ENCODE measurements at regions of chrX and their contacts with region 1.

Region 1: GRCh38 chrX:15493118-15493962 is at the start of gene PIR:
- DNase-seq: peak; percentile 92
- ATAC-seq: peak; percentile 99
- total RNA-seq, gene PIR: 13.2 TPM

Region 2: DNA sequence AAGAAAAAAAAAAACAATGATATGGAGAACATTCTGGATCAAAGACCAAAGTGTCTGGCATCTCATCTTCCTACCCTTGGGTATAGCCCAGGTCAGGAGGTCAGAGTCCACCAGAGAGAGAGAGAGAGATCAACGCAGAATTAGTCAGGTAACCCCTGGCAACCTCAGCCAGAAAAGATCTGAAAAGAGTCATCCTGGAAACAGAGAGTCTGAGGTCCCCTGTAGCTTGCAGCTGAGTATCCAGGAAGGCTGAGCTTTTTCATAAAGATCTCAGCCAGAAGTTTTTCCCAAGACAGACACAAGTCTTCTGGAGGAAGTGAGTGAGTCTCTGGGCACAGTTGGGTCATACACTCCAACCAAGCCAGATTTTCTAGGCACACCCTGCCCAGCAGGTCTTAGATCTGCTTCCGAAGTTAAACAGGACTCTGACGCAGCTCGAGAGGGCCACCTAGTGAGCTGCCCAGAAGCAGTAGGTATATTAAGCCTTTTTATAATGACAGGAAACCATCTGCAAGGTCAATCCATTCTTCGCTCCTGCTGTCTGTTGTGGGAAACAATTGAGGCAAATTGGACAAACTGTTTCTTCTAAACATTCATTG is 71.7 kb after region 1 on chrX:
- intact Hi-C with region 1: loop called (anchors 2 kb)
- DNase-seq: peak; percentile 52
- ATAC-seq: peak; percentile 91

Region 3: GRCh38 chrX:15645258-15645657 is 151.9 kb after region 1 on chrX:
- intact Hi-C with region 1: loop called (anchors 5 kb)
- DNase-seq: no peak
- ATAC-seq: no peak

Region 4: DNA sequence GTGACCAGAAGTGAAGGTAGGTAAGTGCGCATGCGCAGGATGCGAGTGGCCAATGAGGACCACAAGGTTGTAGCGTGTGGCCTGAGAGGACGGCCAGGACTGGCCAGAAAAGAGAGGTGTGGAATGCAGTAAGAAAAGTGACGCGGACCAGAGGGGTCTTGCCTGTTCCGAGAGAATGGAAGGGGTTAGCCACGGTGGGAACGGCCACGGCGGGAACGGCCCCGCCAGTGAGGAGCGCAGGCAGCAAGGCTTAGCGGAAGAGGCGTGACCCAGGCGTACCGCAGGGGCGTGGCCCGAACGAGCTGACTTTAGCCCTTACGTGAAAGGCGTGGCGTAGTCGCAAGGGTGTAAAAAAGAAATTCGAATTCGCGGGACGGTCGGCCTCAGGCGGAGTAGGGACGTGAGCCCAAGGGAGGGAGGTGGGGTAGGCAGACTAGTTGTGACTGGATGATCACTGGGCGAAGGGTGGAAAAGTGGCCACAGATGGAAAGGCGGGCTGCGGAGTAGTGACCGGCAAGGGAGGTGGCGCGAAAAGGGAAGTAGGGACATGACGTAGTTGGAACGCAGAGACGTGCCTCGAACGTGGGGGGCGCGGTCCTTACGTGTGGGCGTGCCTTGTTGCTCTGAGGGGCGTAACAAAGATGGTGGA is 181.6 kb after region 1 on chrX:
- intact Hi-C with region 1: loop called (anchors 1 kb)
- DNase-seq: peak; percentile 95
- ATAC-seq: peak; percentile 95